ENCODE measurements at regions of chr16 and their contacts with region 1.

Region 1: DNA sequence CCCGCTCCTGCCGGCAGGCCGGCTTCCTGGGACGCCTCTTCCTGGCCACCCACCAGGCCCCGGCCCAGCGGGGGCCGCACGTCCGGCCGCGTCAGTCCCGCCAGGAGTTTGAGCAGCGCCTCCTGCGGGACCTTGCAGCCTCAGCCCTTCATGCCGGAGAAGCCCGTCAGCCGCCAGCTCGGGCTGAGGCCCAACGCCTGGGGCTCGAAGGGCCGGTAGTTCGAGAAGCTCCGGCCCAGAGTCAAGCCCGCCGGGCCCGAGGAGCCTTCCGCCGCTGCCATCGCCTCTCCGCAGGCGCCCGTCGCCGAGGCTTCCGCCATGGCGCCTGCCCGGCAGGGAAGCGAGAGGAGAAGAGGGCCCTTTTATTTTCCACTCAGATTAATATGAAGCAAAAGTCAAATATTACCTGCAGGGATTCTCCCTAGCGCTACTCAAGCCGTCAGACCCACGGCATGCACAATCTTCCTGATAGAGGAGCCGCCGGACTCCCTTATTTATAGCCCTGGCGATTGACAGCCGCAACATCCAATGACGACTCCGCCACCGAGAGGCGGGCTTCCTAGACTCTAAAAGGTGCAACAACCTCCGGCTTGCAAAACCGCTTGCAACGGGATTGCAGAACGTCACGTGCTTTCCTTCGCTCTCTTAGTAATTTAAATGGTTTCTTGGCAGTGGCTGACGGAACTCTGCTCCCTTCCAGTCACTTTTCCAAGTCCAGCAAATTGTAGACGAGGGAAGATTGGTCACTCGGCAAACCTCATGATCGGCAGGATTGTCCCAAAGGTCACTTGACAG is at the start of gene SEPHS2:
- DNase-seq: peak; percentile 95 to 99 (median 97)
- H3K4me3 ChIP-seq: peak within 1 kb of the TSS; percentile 81 to 90 (median 85)
- H3K4me3 Mint-ChIP-seq: peak within 1 kb of the TSS; percentile 89 to 95
- H3K27ac ChIP-seq: peak within 1 kb of the TSS; percentile 83 to 90
- H3K27ac Mint-ChIP-seq: peak within 1 kb of the TSS; percentile 89 to 99 (median 97)
- H3K4me1 ChIP-seq: peaks cover 34 to 36% of the 10 kb centered on the region in 2 donors
- H3K4me1 Mint-ChIP-seq: peaks cover 36% of the 10 kb centered on the region
- H3K27me3 ChIP-seq: no peaks in the 10 kb centered on the region
- H3K27me3 Mint-ChIP-seq: peaks cover 0 to 1% (median 0%) of the 10 kb centered on the region in 3 donors
- CTCF ChIP-seq: peak; percentile 51
- polyA plus RNA-seq, gene SEPHS2: 12.8 to 56.4 (median 54.2) TPM

Region 2: DNA sequence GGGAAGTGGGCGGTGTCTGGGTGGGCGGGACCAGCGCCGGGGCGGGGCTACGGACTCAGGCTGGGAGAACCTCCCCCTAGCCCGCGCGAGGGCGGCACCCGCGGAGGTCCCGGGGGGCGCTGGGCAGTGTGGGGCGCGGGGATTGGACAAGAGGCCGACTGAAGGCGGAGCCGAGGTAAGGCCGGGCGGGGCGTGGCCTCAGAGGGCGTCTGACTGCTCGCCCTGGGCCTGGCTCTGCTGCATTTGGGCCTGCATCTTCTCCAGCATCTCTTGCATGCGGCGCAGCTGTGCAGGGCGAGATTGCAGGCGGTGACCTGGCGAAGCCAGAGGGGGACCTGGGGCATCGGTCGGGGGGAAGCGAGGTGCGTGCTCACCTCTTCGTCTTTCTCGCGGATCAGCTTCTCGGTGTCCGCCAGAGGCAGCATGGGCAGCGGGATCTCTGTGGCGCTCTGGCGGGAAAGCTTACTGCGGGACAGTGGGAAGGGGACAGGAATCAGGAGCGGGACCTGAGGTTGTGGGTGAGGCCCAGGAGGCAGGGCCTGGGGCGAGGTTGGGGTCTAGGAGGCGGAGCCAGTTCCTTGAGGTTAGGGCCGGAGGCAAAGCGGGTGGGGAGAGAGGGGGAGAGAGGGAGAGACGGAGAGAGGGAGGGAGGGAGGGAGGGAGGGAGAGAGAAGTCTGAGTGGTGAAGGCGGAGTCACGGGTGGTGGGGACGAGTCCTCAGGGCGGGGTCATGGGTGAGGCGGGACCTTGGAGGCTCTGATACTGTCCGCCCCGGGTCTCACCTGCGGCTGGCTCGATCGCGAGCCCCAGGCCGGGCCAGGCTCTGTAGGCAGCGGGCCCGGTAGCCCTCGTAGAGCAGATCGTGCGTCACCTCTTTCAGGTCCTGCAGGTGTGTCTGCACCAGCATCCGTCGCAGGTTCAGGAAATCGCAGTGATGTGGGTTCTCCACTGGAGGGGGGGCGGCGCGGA is 67.1 kb before region 1 on chr16:
- intact Hi-C with region 1: no loop called
- DNase-seq: peak; percentile 96 to 98 (median 97)
- H3K4me3 ChIP-seq: peak overlapping the region; percentile 64 to 77 (median 74)
- H3K4me3 Mint-ChIP-seq: peak overlapping the region; percentile 91 to 95
- H3K27ac ChIP-seq: peak overlapping the region; percentile 100
- H3K27ac Mint-ChIP-seq: peak overlapping the region; percentile 99 to 100 (median 100)
- H3K4me1 ChIP-seq: peaks cover 30 to 42% of the 10 kb centered on the region in 2 donors
- H3K4me1 Mint-ChIP-seq: peaks cover 29% of the 10 kb centered on the region
- H3K27me3 ChIP-seq: peaks cover 0 to 3% of the 10 kb centered on the region in 2 donors
- H3K27me3 Mint-ChIP-seq: peaks cover 4 to 9% (median 8%) of the 10 kb centered on the region in 3 donors
- CTCF ChIP-seq: no peak

Region 3: GRCh38 chr16:30395155-30395991 is 50.2 kb before region 1 on chr16 and contains the start of gene ZNF48:
- intact Hi-C with region 1: no loop called
- DNase-seq: peak; percentile 46 to 51 (median 48)
- H3K4me3 ChIP-seq: peak within 1 kb of the TSS; percentile 42 to 80 (median 46)
- H3K4me3 Mint-ChIP-seq: peak within 1 kb of the TSS; percentile 84 to 91
- H3K27ac ChIP-seq: no peak within 1 kb of the TSS
- H3K27ac Mint-ChIP-seq: peak within 1 kb of the TSS in 3 of 7 donors; percentile 20 to 68 (median 33)
- H3K4me1 ChIP-seq: peaks cover 15 to 23% of the 10 kb centered on the region in 2 donors
- H3K4me1 Mint-ChIP-seq: peaks cover 28% of the 10 kb centered on the region
- H3K27me3 ChIP-seq: no peaks in the 10 kb centered on the region
- H3K27me3 Mint-ChIP-seq: peaks cover 7 to 34% (median 12%) of the 10 kb centered on the region in 3 donors
- CTCF ChIP-seq: peak; percentile 73
- polyA plus RNA-seq, gene ZNF48: 0.67 to 1.4 (median 0.93) TPM

Region 4: DNA sequence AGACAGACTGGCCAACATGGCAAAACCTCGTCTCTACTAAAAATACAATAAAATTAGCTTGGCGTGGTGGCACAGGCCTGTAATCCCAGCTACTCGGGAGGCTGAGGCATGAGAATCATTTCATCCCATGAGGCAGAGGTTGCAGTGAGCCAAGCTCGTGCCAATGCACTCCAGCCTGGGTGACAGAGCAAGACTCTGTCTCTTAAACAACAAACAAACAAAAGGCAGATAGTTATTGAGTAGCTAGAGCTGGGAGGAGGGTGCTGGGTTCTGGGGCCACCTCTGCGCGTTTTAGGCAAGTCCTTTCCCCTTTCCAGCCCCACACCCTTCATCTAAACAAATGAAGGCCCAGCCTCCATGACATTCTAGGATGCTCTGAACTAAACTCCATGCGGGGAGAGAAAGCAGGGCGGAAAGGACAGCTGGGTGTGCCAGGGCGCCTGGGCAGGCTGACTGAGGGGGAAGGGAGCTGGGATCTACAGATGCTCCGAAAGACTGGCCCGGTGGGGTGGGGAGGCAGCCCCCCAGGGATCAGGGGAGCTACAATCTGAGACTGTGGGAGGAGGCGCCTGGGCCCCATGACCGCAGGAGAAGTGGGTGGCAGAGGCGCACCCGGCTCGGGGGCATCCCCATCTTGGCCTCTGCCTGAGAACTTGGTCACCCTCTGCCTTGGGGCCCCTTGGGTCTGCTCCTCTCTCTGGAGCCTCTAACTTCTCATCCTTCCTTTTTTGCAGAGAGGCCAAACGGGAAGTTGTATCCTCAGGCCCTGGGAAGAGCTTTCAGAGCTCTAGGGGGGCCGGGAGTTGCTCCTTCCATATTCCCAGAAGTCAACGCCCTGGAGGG is 27.8 kb after region 1 on chr16:
- intact Hi-C with region 1: loop called in 1 of 2 experiments (anchors 1 kb)
- DNase-seq: peak; percentile 54 to 76 (median 61)
- H3K4me3 ChIP-seq: peak overlapping the region; percentile 60 to 94 (median 68)
- H3K4me3 Mint-ChIP-seq: peak overlapping the region; percentile 95 to 96
- H3K27ac ChIP-seq: peak overlapping the region; percentile 86 to 91
- H3K27ac Mint-ChIP-seq: peak overlapping the region; percentile 93 to 99 (median 98)
- H3K4me1 ChIP-seq: peaks cover 66 to 87% of the 10 kb centered on the region in 2 donors
- H3K4me1 Mint-ChIP-seq: peaks cover 76% of the 10 kb centered on the region
- H3K27me3 ChIP-seq: no peaks in the 10 kb centered on the region
- H3K27me3 Mint-ChIP-seq: no peaks in the 10 kb centered on the region
- CTCF ChIP-seq: no peak

Region 5: DNA sequence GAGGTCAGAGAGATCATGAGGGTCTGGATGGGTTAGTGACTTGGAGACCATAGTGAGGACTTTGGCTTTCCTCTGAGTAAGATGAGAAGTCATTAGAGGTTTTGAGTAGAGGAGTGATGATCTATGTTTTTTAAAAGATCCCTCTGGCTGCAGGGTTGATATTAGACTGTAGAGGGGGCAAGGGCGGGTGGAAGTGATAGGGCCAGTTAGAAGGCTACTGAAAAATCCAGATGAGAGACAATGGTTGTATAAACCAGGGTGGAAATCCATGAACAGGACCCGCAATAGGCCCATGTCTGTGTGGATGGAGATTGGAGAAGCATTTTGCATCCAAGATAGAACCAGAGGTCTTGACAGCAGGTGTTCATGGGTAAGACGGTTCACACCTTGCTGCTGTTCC is 36.8 kb after region 1 on chr16:
- intact Hi-C with region 1: loop called in 1 of 2 experiments (anchors 5 kb)
- DNase-seq: no peak
- H3K4me3 ChIP-seq: no peak overlapping the region
- H3K4me3 Mint-ChIP-seq: no peak overlapping the region
- H3K27ac ChIP-seq: peak overlapping the region in 1 of 2 donors; percentile 20
- H3K27ac Mint-ChIP-seq: peak overlapping the region in 1 of 7 donors; percentile 87
- H3K4me1 ChIP-seq: peaks cover 11 to 29% of the 10 kb centered on the region in 2 donors
- H3K4me1 Mint-ChIP-seq: peaks cover 26% of the 10 kb centered on the region
- H3K27me3 ChIP-seq: no peaks in the 10 kb centered on the region
- H3K27me3 Mint-ChIP-seq: peaks cover 0 to 1% (median 0%) of the 10 kb centered on the region in 3 donors
- CTCF ChIP-seq: no peak

Region 6: DNA sequence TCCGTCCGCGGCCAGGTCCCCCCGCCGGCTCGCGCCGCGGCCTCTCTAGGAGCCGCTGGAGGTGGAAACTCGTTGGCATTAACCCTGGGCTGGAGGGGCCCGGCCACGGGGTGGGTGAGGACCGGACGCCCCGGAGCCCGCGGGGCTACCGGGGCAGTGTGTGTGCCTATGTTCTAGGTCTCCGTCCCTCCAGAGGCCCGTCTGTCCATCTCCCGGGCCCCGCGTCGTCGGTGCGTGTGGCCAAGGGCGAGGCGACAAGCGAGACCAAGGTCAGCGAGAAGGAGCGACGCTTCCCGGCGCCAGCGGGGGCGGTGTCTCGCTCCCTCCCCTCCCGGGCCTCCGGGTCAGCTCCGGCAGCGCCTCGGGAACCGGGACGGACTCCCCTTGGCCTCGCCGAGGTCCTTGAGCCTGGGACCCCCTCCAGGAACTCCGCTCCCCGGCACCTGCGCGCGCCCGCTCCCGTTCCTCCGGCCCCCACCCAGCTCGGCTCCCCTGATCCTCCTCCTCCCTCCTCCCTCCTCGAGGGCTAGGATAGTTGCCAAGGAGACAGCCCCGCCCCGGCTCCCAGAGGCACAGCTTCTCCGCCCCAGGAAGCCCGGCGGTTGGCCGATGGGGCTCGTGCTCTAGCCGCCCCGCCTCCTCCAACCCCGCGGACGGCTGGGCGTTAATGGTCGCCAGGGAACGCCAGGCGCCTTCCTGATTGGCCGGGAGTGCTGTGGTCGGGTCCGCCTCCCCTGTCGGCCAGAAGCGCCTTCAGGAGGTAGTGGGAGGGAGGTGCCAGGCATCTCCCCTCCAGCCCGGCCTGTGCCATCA is 81.4 kb after region 1 on chr16:
- intact Hi-C with region 1: loop called in 1 of 2 experiments (anchors 2 kb)
- DNase-seq: peak; percentile 93 to 96 (median 95)
- H3K4me3 ChIP-seq: peak overlapping the region; percentile 59 to 93 (median 63)
- H3K4me3 Mint-ChIP-seq: peak overlapping the region; percentile 84 to 92
- H3K27ac ChIP-seq: peak overlapping the region; percentile 85 to 87
- H3K27ac Mint-ChIP-seq: peak overlapping the region; percentile 92 to 97 (median 97)
- H3K4me1 ChIP-seq: peaks cover 28 to 39% of the 10 kb centered on the region in 2 donors
- H3K4me1 Mint-ChIP-seq: peaks cover 29% of the 10 kb centered on the region
- H3K27me3 ChIP-seq: no peaks in the 10 kb centered on the region
- H3K27me3 Mint-ChIP-seq: peaks cover 0 to 4% (median 3%) of the 10 kb centered on the region in 3 donors
- CTCF ChIP-seq: peak; percentile 49